AG04450 (cell line): ENCODE measurements at regions of chr12 and their contacts with region 1.

Region 1: DNA sequence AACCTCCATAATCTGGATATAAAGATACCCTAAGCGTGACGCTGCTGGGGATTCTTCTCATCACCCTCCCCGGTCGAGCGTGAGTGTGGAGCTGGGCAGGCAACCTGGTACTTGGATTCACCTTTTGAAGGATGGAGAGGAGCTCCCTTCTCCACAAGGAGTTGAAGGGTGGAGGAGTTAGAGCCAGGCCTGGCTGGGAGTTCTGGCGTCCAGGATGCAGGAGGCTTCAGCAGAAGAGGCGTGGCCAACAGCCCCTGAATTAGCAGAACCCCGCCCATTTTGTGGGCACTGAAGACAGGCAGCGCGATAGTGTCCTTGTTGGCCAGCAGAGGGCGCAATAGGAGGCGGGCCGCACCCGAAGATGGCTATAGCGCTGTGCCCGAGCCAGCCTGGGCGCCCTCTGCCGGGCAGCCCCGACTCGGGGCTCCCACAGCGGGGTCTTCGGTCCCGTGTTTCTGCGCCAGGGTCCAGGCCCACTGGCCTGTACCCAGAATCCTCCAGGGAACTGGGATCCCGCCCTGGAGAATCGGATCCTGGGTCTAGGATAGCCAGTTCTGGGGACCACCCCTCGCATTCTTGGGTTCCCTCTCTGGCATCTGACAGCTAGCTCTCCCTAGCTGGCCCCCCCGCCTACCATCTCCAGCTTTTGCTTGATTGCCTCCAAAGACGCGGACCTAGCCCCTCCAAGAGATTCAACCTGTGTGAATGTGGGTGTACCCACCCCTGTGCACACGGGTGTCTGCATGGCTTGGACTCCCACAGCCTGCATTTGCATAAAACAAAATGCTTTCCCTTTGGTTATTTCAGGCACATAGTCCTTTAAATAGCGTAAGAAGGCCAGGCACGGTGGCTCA is 26.0 kb upstream of the SMUG1 start:
- DNase-seq: peak; percentile 60
- H3K4me3 ChIP-seq: peak overlapping the region; percentile 39
- H3K27ac ChIP-seq: no peak overlapping the region
- H3K27me3 ChIP-seq: peaks cover 22% of the 10 kb centered on the region
- CTCF ChIP-seq: peak; percentile 94

Region 2: GRCh38 chr12:54191550-54192022 is 23.2 kb before region 1 on chr12:
- CTCF ChIA-PET with region 1: interaction called, 69 read pairs
- POLR2A ChIA-PET with region 1: no interaction called
- DNase-seq: peak; percentile 60
- H3K4me3 ChIP-seq: no peak overlapping the region
- H3K27ac ChIP-seq: no peak overlapping the region
- H3K27me3 ChIP-seq: peaks cover 13% of the 10 kb centered on the region
- CTCF ChIP-seq: peak; percentile 92

Region 3: DNA sequence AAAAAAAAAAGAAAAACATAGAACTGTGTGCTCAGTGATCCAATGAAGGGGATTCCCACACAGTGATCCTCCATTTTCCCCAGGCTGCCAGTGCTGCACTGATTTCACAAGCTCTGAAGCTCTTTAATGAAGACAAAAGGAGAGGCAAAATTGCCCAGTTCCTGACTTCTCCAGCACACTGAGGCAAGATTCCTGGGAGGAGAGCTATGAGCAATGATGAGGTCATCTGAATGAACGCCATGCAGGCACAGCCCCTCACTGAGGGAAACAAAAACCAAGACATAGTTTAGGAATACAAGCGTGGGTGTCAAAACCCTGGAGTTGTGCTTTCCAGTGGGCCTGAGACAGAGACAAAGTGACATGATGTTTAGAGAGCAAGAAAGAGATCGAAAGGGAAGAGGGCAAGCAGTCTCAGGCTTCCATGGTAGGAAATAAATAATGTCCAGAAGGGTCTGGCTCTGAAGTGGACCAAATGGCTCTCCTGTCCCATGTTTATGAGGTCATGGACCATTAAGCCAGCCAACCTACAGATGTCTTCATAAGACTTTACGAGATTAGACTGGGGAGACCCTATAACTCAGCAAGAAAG is 14.9 kb after region 1 on chr12:
- CTCF ChIA-PET with region 1: interaction called, 35 read pairs
- POLR2A ChIA-PET with region 1: interaction called, 7 read pairs
- DNase-seq: peak; percentile 92
- H3K4me3 ChIP-seq: no peak overlapping the region
- H3K27ac ChIP-seq: peak overlapping the region; percentile 82
- H3K27me3 ChIP-seq: no peaks in the 10 kb centered on the region
- CTCF ChIP-seq: no peak

Region 4: DNA sequence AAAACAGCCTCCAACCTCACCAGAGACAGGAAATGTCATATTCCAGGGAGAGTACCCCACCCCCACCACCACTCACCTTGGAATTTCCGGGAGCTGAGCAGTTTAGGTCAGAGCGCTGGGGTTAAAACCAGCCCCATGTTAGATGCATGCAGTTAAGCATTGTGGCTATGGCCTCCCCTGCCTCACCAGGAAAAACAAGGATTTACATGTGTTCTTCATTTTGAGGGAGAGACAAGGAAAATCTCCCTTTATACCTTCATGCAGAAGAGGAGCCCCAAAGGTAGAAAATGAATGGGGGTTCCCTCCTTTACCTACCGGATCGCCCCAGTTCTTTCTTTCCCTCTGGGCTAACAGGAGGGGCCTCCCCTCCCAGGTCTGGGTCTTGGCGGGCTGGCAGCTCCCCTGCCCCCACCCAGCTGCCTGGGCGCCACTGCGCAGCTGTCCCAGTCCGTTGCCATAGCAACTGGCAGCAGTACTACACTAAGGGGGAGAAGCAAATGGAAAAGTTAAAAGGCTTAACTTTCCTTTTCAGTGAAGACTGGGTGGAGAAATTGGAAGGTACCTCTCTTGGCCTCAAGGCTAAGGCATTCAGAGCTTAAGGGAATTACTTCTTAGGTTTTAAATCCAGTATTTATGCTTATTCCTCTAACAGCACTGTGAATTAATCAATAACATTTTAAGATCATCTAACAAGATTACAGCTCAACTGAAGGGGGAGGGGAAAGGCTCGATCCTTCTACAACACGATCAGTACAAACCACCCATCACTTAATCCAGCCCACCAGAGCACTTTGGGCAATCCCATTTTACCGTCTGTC is 44.6 kb after region 1 on chr12:
- CTCF ChIA-PET with region 1: interaction called, 22 read pairs
- POLR2A ChIA-PET with region 1: no interaction called
- DNase-seq: peak; percentile 63
- H3K4me3 ChIP-seq: peak overlapping the region; percentile 39
- H3K27ac ChIP-seq: peak overlapping the region; percentile 90
- H3K27me3 ChIP-seq: no peaks in the 10 kb centered on the region
- CTCF ChIP-seq: no peak

Region 5: DNA sequence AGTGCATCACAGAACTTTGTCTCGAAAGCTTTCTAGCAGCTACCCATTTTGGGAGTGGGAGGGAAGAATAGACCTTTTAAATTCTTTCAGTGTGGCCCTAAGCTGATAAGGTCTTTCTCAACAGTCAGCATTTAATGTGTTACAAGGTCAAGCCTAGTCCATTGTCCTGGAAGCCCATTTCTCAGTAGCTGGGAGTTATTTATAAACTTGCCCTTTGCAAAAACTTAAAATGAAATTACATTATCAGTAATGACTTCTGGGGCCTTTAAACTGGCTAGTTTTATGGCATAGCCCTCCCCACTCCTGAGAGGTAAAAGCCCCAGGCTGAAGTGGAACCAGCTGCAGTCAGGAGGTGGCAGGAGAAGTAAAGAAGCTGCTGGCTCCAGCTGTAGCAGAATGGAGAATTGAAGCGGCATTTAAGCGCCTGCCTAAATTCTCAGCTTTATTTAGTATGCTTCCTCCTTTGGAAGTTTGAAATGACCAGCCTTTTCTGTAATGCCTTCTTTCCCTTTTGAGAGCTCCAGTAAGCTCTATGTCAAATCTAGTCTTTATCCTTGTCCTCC is 122.6 kb after region 1 on chr12:
- CTCF ChIA-PET with region 1: interaction called, 17 read pairs
- POLR2A ChIA-PET with region 1: interaction called, 8 read pairs
- DNase-seq: no peak
- H3K4me3 ChIP-seq: no peak overlapping the region
- H3K27ac ChIP-seq: no peak overlapping the region
- H3K27me3 ChIP-seq: no peaks in the 10 kb centered on the region
- CTCF ChIP-seq: peak; percentile 11; the same call in 1 of the 2 replicates

Region 6: DNA sequence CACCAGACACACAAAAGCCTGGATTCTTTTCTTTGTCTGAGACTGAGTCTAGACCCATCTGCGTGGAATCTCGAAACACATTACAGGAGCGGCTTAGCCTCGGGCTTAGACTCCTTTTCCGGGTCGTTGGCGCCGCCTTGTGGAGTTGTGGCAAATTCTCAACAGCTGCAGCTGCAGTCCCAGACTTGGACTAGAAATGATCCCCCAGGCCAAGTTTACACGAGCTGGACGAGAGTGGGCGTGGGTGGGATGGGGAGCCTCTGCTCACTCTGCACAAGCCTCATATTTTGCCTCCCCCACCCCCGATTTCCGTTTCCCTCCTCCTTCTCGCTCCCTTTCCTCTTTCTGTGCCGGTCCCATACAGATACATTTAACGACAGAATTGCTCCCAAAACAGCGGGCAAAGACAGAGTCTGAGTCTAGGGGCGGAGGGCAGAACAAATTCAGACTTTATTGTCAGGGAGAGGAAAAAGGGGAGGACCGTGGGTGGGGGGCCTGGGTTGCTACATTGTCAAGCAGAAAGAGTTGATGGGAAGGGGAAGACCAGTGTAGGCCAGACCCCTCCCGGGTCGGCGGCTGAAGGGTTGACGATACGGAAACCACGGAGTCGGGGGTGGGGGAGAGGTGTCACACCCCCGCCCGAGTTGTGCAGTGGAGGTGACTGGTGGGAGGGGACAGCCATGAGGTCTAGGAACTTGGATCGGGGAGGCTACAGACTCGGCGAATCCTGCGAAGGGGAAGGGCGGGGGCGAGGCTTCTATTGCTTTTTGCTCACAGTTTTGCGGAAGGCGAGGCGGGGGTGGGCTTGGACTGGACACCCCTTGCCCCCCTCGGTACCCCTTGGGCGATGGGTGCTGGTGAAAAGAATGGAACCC is 154.2 kb after region 1 on chr12:
- CTCF ChIA-PET with region 1: interaction called, 19 read pairs
- POLR2A ChIA-PET with region 1: interaction called, 5 read pairs
- DNase-seq: peak; percentile 85
- H3K4me3 ChIP-seq: peak overlapping the region; percentile 27; the same call in 1 of the 2 replicates
- H3K27ac ChIP-seq: peak overlapping the region; percentile 24
- H3K27me3 ChIP-seq: no peaks in the 10 kb centered on the region
- CTCF ChIP-seq: peak; percentile 94

Region 7: GRCh38 chr12:54641554-54641953 is 426.8 kb after region 1 on chr12:
- CTCF ChIA-PET with region 1: no interaction called
- POLR2A ChIA-PET with region 1: no interaction called
- DNase-seq: no peak
- H3K4me3 ChIP-seq: no peak overlapping the region
- H3K27ac ChIP-seq: no peak overlapping the region
- H3K27me3 ChIP-seq: no peaks in the 10 kb centered on the region
- CTCF ChIP-seq: no peak